Mammary epithelial cell (primary cell): ENCODE measurements at regions of chr15 and their contacts with region 1.

Region 1: GRCh38 chr15:101242160-101242998 is 9.5 kb downstream of the CHSY1 start:
- DNase-seq: peak; percentile 57
- H3K4me3 ChIP-seq: no peak overlapping the region
- H3K27ac ChIP-seq: peak overlapping the region; percentile 9
- H3K4me1 ChIP-seq: peaks cover 56% of the 10 kb centered on the region
- H3K27me3 ChIP-seq: no peaks in the 10 kb centered on the region
- CTCF ChIP-seq: no peak

Region 2: GRCh38 chr15:101193120-101193644 is 49.2 kb before region 1 on chr15:
- CTCF ChIA-PET with region 1: no interaction called
- dilution Hi-C with region 1: loop called (anchors 5 kb)
- in situ Hi-C with region 1: no loop called
- intact Hi-C with region 1: no loop called
- DNase-seq: no peak
- H3K4me3 ChIP-seq: no peak overlapping the region
- H3K27ac ChIP-seq: no peak overlapping the region
- H3K4me1 ChIP-seq: peaks cover 19% of the 10 kb centered on the region
- H3K27me3 ChIP-seq: no peaks in the 10 kb centered on the region
- CTCF ChIP-seq: no peak